K562 (cell line): ENCODE measurements at regions of chr7 and their contacts with region 1.

Region 1: DNA sequence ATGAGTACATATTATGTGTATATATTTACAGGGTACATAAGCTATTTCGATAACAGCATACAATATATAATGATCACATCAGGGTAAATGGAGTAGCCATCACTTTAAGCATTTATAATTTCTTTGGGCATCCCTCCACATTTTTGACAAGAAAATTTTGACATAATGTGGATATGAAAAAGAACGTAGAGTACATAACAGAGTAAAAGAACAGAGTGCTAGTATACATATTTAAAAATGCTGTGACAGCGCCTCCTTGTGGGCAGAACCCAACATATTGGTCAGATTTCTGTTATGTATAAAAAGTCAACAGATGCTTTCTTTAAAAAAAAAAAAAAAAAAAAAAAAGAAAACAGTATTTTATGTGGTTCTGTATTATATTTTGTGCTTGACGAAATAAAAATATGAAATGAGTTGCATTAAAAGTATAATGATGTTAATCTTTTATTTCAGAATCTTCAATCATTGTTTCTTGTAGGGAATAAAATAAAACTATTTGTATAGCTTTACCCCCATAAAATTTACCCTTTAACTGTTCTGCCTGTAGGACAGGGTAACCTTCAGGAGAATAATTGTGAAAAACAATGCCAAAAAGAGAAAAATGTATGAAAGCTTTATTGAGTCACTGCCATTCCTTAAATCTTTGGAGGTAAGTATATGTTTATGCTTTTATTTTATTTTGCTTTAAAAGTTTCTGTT is 18.3 kb upstream of the HBP1 start:
- DNase-seq: peak; percentile 62 to 91 (median 63)
- ATAC-seq: peak; percentile 87
- H3K4me3 ChIP-seq: no peak overlapping the region
- H3K27ac ChIP-seq: peak overlapping the region; percentile 9; the same call in 1 of the 3 replicates
- H3K4me1 ChIP-seq: no peaks in the 10 kb centered on the region
- H3K27me3 ChIP-seq: no peaks in the 10 kb centered on the region
- CTCF ChIP-seq: peak; percentile 64 to 95 (median 67); a peak in 4 of 6 replicates
- EP300 ChIP-seq: no peak
- POLR2A ChIP-seq: no peak
- RAD21 ChIP-seq: peak; percentile 95 to 96

Region 2: DNA sequence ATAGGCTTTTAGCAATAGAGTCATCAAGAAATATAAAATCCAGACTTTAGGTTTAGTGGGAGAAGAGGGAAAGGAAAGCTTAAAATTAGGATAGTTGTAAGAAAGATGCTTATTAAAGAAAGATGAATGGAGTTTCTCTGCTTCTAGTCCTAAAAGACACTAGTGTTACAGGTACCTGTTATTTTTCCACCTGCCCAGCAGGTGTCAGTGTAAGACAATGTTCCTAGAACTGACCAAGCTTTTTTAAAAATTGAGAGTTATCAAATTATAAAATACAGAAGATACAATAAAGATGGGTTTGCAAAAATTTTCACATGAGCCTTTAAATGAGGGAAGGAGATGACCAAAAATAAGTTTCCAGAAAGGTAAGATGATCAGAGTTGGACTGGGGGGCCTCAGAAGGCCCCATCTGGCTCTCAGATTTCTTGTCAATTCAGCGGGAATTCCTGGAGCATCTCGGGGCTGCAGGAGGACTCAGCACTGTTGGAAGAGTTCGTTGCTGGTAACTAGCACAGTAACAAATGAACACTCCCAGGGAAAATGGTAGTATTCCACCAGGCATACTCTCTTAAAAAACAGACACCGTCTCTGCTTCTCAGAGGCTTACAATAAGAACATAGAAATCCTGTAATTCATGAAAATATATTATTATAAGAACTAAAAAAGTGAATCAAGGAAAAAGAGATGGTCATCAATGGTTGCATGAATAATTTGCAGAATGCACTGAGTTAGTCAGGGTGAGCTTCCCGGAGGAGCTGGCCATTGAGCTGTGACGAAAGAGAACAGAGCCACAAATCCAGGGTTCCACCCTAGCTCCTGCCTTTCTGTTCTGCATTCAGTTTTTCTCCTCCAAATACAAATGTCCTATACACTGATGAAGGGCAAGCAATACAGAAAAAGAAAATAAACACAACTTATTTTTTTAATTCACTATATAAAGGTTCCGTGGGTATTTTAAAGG is 357.2 kb before region 1 on chr7:
- CTCF ChIA-PET with region 1: interaction called, 75 read pairs
- POLR2A ChIA-PET with region 1: interaction called, 3 read pairs
- in situ Hi-C with region 1: loop called (anchors 5 kb)
- intact Hi-C with region 1: loop called (anchors 1 kb)
- DNase-seq: peak; percentile 59 to 78 (median 63)
- ATAC-seq: peak; percentile 53
- H3K4me3 ChIP-seq: no peak overlapping the region
- H3K27ac ChIP-seq: no peak overlapping the region
- H3K4me1 ChIP-seq: peaks cover 0 to 5% of the 10 kb centered on the region in 2 experiments; a peak in 1 of 5 replicates
- H3K27me3 ChIP-seq: no peaks in the 10 kb centered on the region
- CTCF ChIP-seq: peak; percentile 59 to 93 (median 74); a peak in 5 of 6 replicates
- EP300 ChIP-seq: no peak
- POLR2A ChIP-seq: no peak
- RAD21 ChIP-seq: peak; percentile 91 to 94

Region 3: GRCh38 chr7:107078517-107078966 is 72.0 kb before region 1 on chr7:
- CTCF ChIA-PET with region 1: interaction called, 3 read pairs
- POLR2A ChIA-PET with region 1: no interaction called
- in situ Hi-C with region 1: no loop called
- intact Hi-C with region 1: loop called (anchors 2 kb)
- DNase-seq: peak; percentile 49 to 74 (median 61)
- ATAC-seq: peak; percentile 33
- H3K4me3 ChIP-seq: no peak overlapping the region
- H3K27ac ChIP-seq: peak overlapping the region; percentile 65
- H3K4me1 ChIP-seq: peaks cover 27 to 64% of the 10 kb centered on the region in 2 experiments
- H3K27me3 ChIP-seq: no peaks in the 10 kb centered on the region
- CTCF ChIP-seq: no peak
- EP300 ChIP-seq: no peak
- POLR2A ChIP-seq: no peak
- RAD21 ChIP-seq: no peak

Region 4: DNA sequence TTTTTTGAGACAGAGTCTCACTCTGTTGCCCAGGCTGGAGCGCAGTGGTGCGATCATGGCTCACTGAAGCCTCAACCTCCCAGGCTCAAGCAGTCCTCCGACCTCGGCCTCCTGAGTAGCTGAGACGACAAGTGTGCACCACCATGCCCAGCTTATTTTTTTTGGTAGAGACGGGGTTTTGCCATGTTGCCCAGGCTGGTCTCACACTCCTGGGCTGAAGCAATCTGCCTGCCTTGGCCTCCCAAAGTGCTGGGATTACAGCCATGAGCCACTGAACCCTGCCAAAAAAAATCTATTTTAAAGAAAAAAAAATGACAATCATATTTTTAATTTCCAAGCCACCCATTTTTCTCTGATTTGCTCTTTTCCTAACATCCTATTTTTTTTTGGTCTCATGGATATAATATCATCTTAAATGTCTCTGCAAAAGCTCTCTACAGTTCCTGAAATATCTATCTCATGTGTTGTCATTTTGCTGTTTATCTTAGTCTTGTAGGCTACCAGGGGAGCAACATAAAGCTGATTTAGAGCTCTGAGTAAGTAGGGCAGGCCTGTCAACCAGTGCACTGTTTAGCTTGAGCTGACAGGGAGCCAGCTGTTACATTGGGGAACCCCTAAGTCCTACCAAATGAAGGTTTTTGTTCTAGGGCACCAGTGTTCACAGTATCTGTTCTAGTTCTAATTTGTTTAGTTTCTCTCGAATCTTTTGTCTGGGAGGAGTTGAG is 11.7 kb before region 1 on chr7:
- CTCF ChIA-PET with region 1: no interaction called
- POLR2A ChIA-PET with region 1: interaction called, 10 read pairs
- in situ Hi-C with region 1: no loop called
- intact Hi-C with region 1: no loop called
- DNase-seq: no peak
- ATAC-seq: peak; percentile 41
- H3K4me3 ChIP-seq: no peak overlapping the region
- H3K27ac ChIP-seq: no peak overlapping the region
- H3K4me1 ChIP-seq: no peaks in the 10 kb centered on the region; a peak in 1 of 5 replicates
- H3K27me3 ChIP-seq: no peaks in the 10 kb centered on the region
- CTCF ChIP-seq: no peak
- EP300 ChIP-seq: no peak
- POLR2A ChIP-seq: no peak
- RAD21 ChIP-seq: no peak

Region 5: GRCh38 chr7:107982918-107983389 is 832.4 kb after region 1 on chr7:
- CTCF ChIA-PET with region 1: no interaction called
- POLR2A ChIA-PET with region 1: no interaction called
- in situ Hi-C with region 1: no loop called
- intact Hi-C with region 1: no loop called
- DNase-seq: no peak
- ATAC-seq: peak; percentile 82
- H3K4me3 ChIP-seq: no peak overlapping the region
- H3K27ac ChIP-seq: no peak overlapping the region
- H3K4me1 ChIP-seq: no peaks in the 10 kb centered on the region
- H3K27me3 ChIP-seq: no peaks in the 10 kb centered on the region
- CTCF ChIP-seq: peak; percentile 20 to 25 (median 25); a peak in 1 of 6 replicates
- EP300 ChIP-seq: no peak
- POLR2A ChIP-seq: no peak
- RAD21 ChIP-seq: no peak